Heart left ventricle (tissue), 16 donors: ENCODE measurements at regions of chr3 and their contacts with region 1.

Region 1: GRCh38 chr3:86774082-86774691 is 216.8 kb downstream of the VGLL3 start:
- DNase-seq: no peak
- ATAC-seq: no peak
- H3K4me3 ChIP-seq: no peak overlapping the region
- H3K27ac ChIP-seq: no peak overlapping the region
- H3K4me1 ChIP-seq: no peaks in the 10 kb centered on the region
- H3K27me3 ChIP-seq: no peaks in the 10 kb centered on the region
- CTCF ChIP-seq: peak; percentile 19 to 65 (median 47)
- POLR2A ChIP-seq: no peak

Region 2: DNA sequence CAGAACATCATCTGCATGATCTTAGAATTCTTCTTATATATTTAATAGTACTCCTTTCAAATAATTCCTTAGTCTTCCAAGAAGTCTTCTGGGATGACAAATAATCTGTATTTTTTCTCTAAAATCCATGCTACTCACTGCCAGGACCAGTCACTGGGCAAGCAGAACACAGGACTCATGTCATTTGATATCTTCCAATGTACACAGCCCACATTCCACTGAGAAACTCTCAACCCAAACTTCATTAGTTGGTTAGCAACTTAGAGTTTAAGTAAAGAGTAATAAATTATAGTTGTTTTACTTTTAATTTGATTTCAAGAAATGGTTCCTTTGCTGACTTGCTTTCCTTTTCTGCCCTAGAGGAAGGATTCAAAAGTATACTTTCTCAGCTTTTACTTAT is 100.2 kb before region 1 on chr3:
- intact Hi-C with region 1: no loop called
- DNase-seq: no peak
- ATAC-seq: no peak
- H3K4me3 ChIP-seq: no peak overlapping the region
- H3K27ac ChIP-seq: no peak overlapping the region
- H3K4me1 ChIP-seq: no peaks in the 10 kb centered on the region
- H3K27me3 ChIP-seq: no peaks in the 10 kb centered on the region
- CTCF ChIP-seq: no peak
- POLR2A ChIP-seq: no peak

Region 3: GRCh38 chr3:87082796-87083440 is 308.7 kb after region 1 on chr3:
- intact Hi-C with region 1: loop called (anchors 2 to 10 kb)
- DNase-seq: no peak
- ATAC-seq: peak in 3 of 4 donors; percentile 57 to 71 (median 58)
- H3K4me3 ChIP-seq: no peak overlapping the region
- H3K27ac ChIP-seq: no peak overlapping the region
- H3K4me1 ChIP-seq: no peaks in the 10 kb centered on the region
- H3K27me3 ChIP-seq: no peaks in the 10 kb centered on the region
- CTCF ChIP-seq: peak; percentile 20 to 64 (median 42)
- POLR2A ChIP-seq: no peak

Region 4: DNA sequence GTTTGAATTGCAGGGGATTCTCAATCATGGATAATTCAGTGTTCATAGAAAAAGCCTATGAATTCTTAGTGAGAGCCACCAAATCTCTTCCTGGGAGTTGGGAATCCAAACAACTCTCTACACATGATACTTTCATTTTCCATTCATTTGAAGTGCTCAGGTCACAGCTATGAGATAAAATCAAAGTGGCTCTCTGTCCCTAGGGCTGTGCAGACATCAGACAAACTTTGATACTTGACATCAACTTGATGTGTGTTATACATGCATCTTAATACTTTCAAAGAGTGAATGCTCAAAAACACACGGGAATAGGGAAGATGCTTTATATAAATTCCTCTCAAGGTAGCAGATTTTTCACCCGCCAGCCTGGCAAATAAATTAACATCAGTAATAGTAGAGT is 377.6 kb after region 1 on chr3:
- intact Hi-C with region 1: loop called in 1 of 10 experiments (anchors 10 kb)
- DNase-seq: no peak
- ATAC-seq: no peak
- H3K4me3 ChIP-seq: no peak overlapping the region
- H3K27ac ChIP-seq: no peak overlapping the region
- H3K4me1 ChIP-seq: no peaks in the 10 kb centered on the region
- H3K27me3 ChIP-seq: no peaks in the 10 kb centered on the region
- CTCF ChIP-seq: no peak
- POLR2A ChIP-seq: no peak

Region 5: DNA sequence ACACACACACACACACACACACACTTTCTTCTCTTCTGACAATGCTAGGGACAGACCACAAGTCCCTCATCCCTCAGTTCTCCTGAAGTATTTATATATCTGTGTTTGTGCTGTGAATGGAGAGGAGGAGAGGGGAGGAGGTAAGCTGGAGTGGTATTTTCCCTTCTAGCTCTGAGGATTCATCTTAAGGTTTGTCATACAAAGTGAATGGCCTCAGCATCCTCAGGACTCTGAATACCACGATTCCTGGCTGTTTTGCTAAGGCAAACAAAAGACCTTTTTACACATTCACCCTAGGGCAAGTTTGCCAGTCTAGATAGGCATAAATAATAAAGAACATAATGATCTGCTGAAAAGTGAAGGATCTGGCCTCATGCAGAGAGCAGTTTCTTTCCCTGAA is 387.2 kb after region 1 on chr3:
- intact Hi-C with region 1: loop called in 7 of 10 experiments (anchors 5 to 10 kb)
- DNase-seq: no peak
- ATAC-seq: no peak
- H3K4me3 ChIP-seq: no peak overlapping the region
- H3K27ac ChIP-seq: no peak overlapping the region
- H3K4me1 ChIP-seq: no peaks in the 10 kb centered on the region
- H3K27me3 ChIP-seq: peaks cover 0 to 2% (median 0%) of the 10 kb centered on the region in 9 donors
- CTCF ChIP-seq: no peak
- POLR2A ChIP-seq: no peak

Region 6: DNA sequence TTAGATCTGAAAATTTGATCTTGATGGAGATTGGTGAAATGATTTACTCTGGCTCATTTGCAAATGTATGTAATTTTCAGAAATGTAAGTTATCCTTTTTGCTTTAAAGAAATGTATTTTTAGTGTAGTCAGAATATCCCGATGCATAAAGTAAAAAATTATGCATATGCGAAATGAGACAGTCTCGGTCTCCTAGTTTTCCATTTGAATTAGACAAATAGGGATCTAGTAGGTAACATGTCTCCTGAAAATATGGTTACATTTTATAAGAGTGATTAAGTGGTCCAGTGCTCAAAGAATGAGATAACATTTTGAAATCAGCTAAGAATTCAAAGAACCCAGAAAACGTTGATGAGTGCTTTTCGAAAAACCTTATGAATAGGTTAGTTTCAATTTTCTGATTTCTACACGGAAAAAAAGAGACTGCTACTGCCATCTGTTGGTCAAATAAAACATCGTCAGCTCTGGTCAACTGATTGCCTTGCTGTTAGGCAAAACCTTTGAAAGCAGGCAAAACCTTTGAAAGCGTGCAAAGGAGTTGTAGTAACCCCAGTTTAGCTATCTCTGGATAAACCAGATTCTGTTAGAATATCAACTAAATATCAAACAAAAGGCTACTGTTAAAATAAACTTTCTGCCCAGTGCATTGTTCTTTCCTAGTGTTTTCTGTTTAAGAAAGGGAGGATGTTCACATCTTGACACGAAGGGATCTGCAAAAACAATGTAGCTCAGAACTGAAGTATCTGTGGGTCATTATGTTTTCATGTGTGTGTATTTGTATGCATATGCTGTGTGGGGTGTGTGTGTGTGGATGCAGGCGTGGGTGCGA is 393.7 kb after region 1 on chr3:
- intact Hi-C with region 1: loop called in 9 of 10 experiments (anchors 2 to 5 kb)
- DNase-seq: no peak
- ATAC-seq: no peak
- H3K4me3 ChIP-seq: peak overlapping the region in 9 of 12 donors; percentile 26 to 46 (median 35)
- H3K27ac ChIP-seq: no peak overlapping the region
- H3K4me1 ChIP-seq: peaks cover 0 to 5% (median 0%) of the 10 kb centered on the region in 12 donors
- H3K27me3 ChIP-seq: peaks cover 0 to 5% (median 0%) of the 10 kb centered on the region in 9 donors
- CTCF ChIP-seq: peak; percentile 40 to 73 (median 62)
- POLR2A ChIP-seq: no peak